Cardiac septum (tissue), 1 donor: ENCODE measurements at regions of chr10 and their contacts with region 1.

Region 1: DNA sequence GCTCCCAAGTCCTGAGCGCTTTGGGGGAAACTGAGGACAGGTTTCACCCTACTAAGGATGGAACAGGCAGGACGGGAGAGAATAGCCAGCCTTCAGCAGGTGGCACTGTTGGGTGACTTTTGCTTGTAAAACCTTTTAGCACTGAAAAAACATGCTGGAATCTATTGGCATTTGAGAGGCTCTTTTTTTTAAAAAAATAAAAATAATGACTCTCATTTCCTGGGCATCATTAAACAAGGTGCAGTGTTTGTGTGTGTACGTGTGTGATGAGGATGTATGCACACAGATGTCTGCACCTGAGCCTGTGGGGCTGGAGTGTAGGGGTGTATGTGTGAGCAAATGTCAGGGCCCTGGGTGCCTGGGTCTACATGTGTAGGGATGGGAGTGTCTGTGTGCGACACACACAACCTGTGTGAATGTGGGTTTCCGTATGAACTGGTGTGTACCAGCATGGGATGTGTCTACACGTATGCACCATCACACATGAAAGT is 177.9 kb downstream of the RPS24 start:
- DNase-seq: no peak

Region 2: GRCh38 chr10:78302989-78303854 is 91.6 kb after region 1 on chr10:
- intact Hi-C with region 1: loop called (anchors 2 kb)
- DNase-seq: peak; percentile 98

Region 3: GRCh38 chr10:78407009-78407711 is 195.6 kb after region 1 on chr10:
- intact Hi-C with region 1: loop called (anchors 5 kb)
- DNase-seq: peak; percentile 86

Region 4: DNA sequence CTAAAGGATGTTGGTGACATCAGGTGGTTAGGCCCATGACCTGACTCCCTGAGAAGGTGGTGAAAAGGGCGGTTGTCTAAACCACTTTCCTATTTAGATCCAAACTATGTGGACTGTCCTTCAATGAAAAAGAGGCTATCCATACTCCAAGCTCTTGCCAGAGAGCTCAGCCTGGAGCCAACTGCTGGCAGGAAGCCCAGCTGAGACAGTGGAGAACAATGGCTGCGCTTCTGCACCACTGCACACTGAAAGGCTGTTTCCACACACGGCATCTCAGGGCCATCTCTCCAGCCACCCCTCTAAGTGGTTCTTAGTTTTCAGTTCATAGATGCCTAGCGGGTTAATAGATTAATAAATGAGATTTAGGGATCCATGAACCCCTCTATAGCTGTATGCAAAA is 368.4 kb after region 1 on chr10:
- intact Hi-C with region 1: loop called (anchors 10 kb)
- DNase-seq: peak; percentile 86

Region 5: GRCh38 chr10:78645169-78645686 is 433.6 kb after region 1 on chr10:
- intact Hi-C with region 1: no loop called
- DNase-seq: no peak

Region 6: GRCh38 chr10:78657163-78657861 is 445.7 kb after region 1 on chr10:
- intact Hi-C with region 1: loop called (anchors 5 kb)
- DNase-seq: peak; percentile 81

Region 7: GRCh38 chr10:78972947-78973900 is 761.6 kb after region 1 on chr10:
- intact Hi-C with region 1: loop called (anchors 10 kb)
- DNase-seq: peak; percentile 91